CD4-positive, alpha-beta memory T cell (primary cell): ENCODE measurements at regions of chr12 and their contacts with region 1.

Region 1: DNA sequence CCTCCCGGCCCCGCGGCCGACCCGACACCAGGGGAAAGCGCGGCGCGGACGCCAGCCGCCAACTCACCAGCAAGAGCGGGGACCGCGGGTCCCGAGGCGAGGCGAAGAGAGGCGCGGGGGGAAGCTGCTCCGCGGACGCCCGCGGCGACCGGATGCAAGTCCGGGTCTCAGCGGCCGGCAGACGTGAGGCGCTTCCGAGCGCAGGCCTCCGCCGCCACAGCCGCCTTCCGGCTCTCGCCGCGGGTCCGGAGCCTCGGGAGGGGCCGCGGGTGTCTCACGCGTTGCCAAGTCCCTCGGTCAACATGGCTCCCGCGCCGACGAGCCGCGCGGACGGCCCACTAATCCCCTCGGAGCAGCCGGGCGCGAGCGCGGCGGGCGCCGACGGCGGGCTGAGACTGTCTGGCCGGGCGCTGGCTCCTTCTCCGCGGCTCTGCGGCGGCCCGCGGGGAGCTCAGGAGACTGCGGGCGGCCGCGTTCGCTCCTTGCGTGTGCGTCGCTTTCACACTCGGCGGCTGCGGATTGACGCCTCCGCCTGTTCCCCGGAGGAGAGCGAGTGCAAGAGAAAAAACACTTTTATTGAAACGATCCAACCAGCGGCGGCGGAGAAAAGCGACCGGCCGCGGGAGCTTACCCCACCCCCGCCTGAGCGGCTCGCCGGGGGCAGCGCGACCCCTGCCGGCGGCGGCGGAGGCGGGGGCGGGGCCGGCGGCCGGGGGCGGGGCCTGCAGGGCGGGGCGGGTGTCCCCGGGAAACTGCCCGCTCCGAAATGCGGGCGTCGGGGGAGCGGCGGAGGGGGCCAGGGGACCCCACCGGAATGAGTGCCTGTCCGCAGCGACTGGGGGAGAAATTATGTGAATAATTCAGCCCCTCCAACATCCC is at the start of gene CDK17:
- DNase-seq: peak; percentile 90 to 92 (median 90)
- H3K4me3 ChIP-seq: peak within 1 kb of the TSS; percentile 86 to 87
- H3K4me3 Mint-ChIP-seq: peak within 1 kb of the TSS; percentile 96 to 99 (median 98)
- H3K27ac ChIP-seq: peak within 1 kb of the TSS; percentile 96
- H3K27ac Mint-ChIP-seq: peak within 1 kb of the TSS; percentile 96 to 99 (median 98)
- H3K4me1 ChIP-seq: peaks cover 45% of the 10 kb centered on the region
- H3K4me1 Mint-ChIP-seq: peaks cover 30 to 55% (median 40%) of the 10 kb centered on the region in 4 donors
- H3K27me3 ChIP-seq: no peaks in the 10 kb centered on the region
- H3K27me3 Mint-ChIP-seq: no peaks in the 10 kb centered on the region
- total RNA-seq, gene CDK17: 66.9 to 67.4 TPM

Region 2: DNA sequence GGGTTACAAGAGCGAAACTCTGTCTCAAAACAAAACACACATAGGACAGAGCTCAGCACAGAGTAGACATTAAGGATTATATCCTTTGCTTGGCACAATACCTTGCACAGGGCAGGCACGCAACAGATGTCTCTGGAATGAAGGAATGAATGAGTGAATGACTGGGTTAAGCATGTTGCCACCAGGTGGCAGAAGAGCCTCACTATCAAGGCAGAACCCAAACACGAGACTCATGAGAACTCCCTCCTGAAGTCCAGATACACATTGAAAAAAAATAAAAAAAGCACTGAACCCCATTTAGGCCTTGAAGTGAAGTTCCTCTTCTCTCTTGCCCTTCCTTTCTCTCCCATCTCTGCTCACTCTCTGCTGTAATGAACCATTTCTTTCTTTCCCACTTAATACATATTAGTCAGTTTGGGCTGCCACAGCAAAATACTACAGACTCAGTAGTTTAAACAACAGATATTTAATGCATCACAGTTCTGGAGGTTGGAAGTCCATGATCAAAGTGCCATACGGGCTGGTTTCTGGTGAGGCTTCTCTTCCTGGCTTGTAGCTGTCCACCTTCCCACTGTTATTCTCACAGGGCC is 338.2 kb before region 1 on chr12:
- CTCF ChIA-PET with region 1: interaction called, 20 read pairs
- POLR2A ChIA-PET with region 1: interaction called, 4 read pairs
- intact Hi-C with region 1: loop called (anchors 1 kb)
- DNase-seq: peak; percentile 75 to 80 (median 78)
- H3K4me3 ChIP-seq: no peak overlapping the region
- H3K4me3 Mint-ChIP-seq: peak overlapping the region in 1 of 8 donors; percentile 9
- H3K27ac ChIP-seq: no peak overlapping the region
- H3K27ac Mint-ChIP-seq: peak overlapping the region in 5 of 7 donors; percentile 1 to 73 (median 36)
- H3K4me1 ChIP-seq: peaks cover 26% of the 10 kb centered on the region
- H3K4me1 Mint-ChIP-seq: peaks cover 19 to 36% (median 27%) of the 10 kb centered on the region in 4 donors
- H3K27me3 ChIP-seq: no peaks in the 10 kb centered on the region
- H3K27me3 Mint-ChIP-seq: no peaks in the 10 kb centered on the region

Region 3: GRCh38 chr12:96237465-96238077 is 162.6 kb before region 1 on chr12:
- CTCF ChIA-PET with region 1: interaction called, 20 read pairs
- POLR2A ChIA-PET with region 1: interaction called, 18 read pairs
- intact Hi-C with region 1: loop called (anchors 1 kb)
- DNase-seq: peak; percentile 57 to 86 (median 62)
- H3K4me3 ChIP-seq: peak overlapping the region in 1 of 2 donors; percentile 11
- H3K4me3 Mint-ChIP-seq: peak overlapping the region in 7 of 8 donors; percentile 63 to 83 (median 80)
- H3K27ac ChIP-seq: peak overlapping the region; percentile 57
- H3K27ac Mint-ChIP-seq: peak overlapping the region; percentile 94 to 100 (median 98)
- H3K4me1 ChIP-seq: peaks cover 82% of the 10 kb centered on the region
- H3K4me1 Mint-ChIP-seq: peaks cover 59 to 97% (median 81%) of the 10 kb centered on the region in 4 donors
- H3K27me3 ChIP-seq: no peaks in the 10 kb centered on the region
- H3K27me3 Mint-ChIP-seq: no peaks in the 10 kb centered on the region

Region 4: DNA sequence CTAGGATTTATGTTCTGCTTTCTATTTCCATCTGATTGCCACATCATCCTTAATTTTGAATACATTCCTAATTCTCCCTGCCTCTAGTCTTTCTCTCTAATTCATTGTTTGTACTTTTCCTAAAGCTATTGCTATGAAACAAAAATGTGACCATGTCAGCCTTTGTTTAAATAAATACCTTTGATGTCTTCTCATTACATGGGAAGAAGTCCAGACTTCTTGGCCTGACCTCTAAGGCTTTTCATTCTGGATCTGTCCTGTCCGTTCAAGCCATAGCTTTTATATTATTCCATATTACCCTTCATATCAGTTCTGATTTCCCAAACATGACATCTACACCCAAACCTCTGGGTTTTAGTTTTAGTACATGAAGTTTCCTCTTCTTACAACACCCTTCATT is 91.3 kb before region 1 on chr12:
- CTCF ChIA-PET with region 1: interaction called, 21 read pairs
- POLR2A ChIA-PET with region 1: interaction called, 17 read pairs
- intact Hi-C with region 1: no loop called
- DNase-seq: no peak
- H3K4me3 ChIP-seq: no peak overlapping the region
- H3K4me3 Mint-ChIP-seq: no peak overlapping the region
- H3K27ac ChIP-seq: no peak overlapping the region
- H3K27ac Mint-ChIP-seq: peak overlapping the region in 5 of 7 donors; percentile 18 to 74 (median 39)
- H3K4me1 ChIP-seq: peaks cover 15% of the 10 kb centered on the region
- H3K4me1 Mint-ChIP-seq: peaks cover 13 to 35% (median 20%) of the 10 kb centered on the region in 4 donors
- H3K27me3 ChIP-seq: no peaks in the 10 kb centered on the region
- H3K27me3 Mint-ChIP-seq: no peaks in the 10 kb centered on the region

Region 5: DNA sequence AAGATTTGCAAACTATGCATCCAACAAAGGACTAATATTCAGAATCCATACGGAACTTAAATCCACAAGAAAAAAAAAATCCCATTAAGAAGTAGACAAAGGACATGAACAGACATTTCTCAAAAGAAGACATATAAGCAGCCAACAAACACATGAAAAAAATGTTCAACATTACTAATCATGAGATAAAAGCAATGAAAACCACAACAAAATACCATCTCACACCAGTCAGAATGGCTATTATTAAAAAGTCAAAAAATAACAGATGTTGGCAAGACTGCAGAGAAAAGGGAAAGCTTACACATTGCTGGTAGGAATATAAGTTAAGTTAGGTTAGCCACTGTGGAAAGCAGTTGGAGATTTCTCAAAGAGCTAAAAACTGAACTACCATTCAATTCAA is 16.2 kb before region 1 on chr12:
- CTCF ChIA-PET with region 1: interaction called, 45 read pairs
- POLR2A ChIA-PET with region 1: interaction called, 81 read pairs
- intact Hi-C with region 1: no loop called
- DNase-seq: no peak
- H3K4me3 ChIP-seq: no peak overlapping the region
- H3K4me3 Mint-ChIP-seq: peak overlapping the region in 4 of 8 donors; percentile 38 to 66 (median 52)
- H3K27ac ChIP-seq: no peak overlapping the region
- H3K27ac Mint-ChIP-seq: peak overlapping the region in 3 of 7 donors; percentile 5 to 31 (median 11)
- H3K4me1 ChIP-seq: peaks cover 79% of the 10 kb centered on the region
- H3K4me1 Mint-ChIP-seq: peaks cover 55 to 77% (median 70%) of the 10 kb centered on the region in 4 donors
- H3K27me3 ChIP-seq: no peaks in the 10 kb centered on the region
- H3K27me3 Mint-ChIP-seq: no peaks in the 10 kb centered on the region

Region 6: DNA sequence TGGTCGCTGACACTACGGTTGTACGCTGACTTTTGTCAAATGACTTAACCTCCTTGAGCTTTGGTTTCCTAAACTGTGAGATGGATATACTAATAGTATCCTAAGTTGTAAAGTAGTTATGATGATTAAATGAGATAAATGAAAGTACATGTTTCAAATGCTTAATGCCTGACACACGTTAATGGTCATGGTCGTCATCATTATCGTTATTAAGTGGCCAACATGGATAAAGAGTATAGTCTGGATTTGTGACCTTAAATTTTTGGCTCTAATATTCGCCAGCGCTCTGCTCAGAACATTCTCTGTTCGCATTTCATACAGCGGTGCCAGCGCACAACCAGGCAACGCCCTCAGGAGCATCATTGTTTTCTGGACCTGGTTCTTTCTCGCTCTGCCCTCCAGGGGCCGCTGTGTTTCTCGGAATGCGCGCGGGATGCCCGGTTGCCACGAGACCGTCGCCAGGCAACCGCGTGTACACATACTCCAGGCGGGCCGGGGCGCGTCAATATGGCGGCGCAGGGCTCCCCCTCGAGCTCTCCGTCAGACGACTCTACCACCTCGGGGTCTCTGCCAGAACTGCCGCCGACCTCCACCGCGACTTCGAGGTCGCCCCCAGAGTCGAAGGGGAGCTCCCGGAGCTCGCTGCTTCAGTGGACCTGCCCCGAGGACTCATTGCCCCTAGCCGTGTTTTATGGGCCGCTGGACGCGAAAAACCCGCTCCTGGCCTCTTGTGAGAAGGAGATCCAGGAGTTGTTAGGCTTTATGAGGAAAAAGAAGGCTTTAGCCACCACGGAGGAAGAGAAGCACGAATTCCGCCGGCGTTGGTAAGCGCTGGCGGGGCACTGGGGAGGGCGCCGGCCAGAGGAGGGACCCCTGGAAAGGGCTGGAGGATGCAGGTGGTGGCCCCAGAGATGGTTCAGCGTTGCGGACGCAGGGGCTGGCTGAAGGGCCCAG is 89.2 kb after region 1 on chr12 and contains the start of gene CFAP54:
- CTCF ChIA-PET with region 1: interaction called, 65 read pairs
- POLR2A ChIA-PET with region 1: interaction called, 35 read pairs
- intact Hi-C with region 1: loop called (anchors 1 kb)
- DNase-seq: peak; percentile 94 to 96 (median 95)
- H3K4me3 ChIP-seq: peak within 1 kb of the TSS; percentile 64 to 84
- H3K4me3 Mint-ChIP-seq: peak within 1 kb of the TSS; percentile 84 to 93 (median 92)
- H3K27ac ChIP-seq: peak within 1 kb of the TSS; percentile 62
- H3K27ac Mint-ChIP-seq: peak within 1 kb of the TSS; percentile 86 to 98 (median 97)
- H3K4me1 ChIP-seq: peaks cover 22% of the 10 kb centered on the region
- H3K4me1 Mint-ChIP-seq: peaks cover 19 to 31% (median 23%) of the 10 kb centered on the region in 4 donors
- H3K27me3 ChIP-seq: no peaks in the 10 kb centered on the region
- H3K27me3 Mint-ChIP-seq: no peaks in the 10 kb centered on the region
- total RNA-seq, gene CFAP54: 0.73 to 1.1 TPM

Region 7: DNA sequence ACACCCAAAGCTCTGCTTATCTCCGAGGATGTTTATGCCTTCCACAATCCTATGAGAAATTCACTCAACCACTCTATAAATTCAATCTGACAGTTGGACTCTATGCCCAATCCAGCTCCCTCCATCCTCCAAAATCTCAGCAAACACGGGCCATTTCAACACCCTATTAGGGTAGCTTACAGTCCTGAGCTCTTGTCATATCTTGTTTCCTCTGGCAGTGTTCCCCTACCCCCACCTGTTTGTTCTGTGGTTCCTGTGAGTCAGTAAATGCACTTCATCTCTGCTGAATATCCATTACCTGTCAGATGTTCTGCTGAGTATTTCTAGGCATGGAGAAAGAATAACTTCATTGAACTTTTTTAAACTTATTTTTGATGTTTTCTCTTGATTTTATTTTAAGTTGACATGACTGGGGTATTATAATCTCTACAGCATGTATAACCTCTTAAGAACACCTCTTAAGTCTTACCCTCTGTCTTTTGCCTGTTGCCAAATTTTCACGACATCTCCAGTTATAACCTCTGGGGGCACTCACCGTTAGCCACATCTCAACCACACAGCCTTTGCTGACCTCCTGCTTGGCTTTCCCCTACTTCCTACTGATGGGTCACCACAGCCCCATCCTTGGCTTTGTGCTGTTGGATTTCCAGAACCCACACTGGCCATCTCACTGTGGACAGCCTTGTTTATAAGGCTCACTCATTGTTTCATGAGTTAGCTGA is 1798.3 kb after region 1 on chr12:
- CTCF ChIA-PET with region 1: no interaction called
- POLR2A ChIA-PET with region 1: no interaction called
- intact Hi-C with region 1: no loop called
- DNase-seq: no peak
- H3K4me3 ChIP-seq: no peak overlapping the region
- H3K4me3 Mint-ChIP-seq: no peak overlapping the region
- H3K27ac ChIP-seq: no peak overlapping the region
- H3K27ac Mint-ChIP-seq: peak overlapping the region in 1 of 7 donors; percentile 69
- H3K4me1 ChIP-seq: no peaks in the 10 kb centered on the region
- H3K4me1 Mint-ChIP-seq: no peaks in the 10 kb centered on the region
- H3K27me3 ChIP-seq: no peaks in the 10 kb centered on the region
- H3K27me3 Mint-ChIP-seq: peaks cover 7% of the 10 kb centered on the region in 2 donors